SK-N-SH (cell line): ENCODE measurements at regions of chr17 and their contacts with region 1.

Region 1: DNA sequence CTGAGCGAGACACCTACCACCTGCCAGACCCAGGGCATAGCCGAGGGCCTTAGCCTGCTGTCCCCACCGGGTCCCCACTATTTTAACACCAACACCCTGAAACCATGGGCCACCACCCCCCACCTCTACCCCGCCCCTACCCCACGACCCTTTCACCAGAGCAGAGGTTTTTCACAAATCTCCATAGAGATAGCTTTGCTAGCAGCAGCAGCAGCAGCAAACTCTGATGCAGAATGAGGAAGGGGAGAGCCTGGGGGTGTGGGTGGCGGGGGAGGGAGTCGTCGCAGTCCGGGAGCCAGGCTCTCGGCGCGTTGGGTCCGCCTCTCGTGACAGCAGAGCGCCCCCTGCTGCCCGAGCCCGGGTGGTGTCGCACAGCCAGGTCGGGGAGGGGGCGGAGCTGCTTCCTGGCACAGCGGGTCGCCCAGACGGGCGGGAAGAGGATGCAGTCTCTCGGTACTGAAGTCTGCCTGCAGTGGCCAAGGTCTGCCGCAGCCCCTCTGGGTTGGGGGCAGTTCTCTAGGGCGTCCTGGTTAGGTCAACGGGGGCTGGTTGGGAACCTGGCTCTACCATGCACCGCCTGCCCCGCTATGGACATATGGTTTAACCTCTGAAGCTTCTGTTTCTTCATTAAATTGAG is 38.1 kb upstream of the CCDC182 start:
- DNase-seq: peak; percentile 98
- H3K4me3 ChIP-seq: peak overlapping the region in 1 of 2 experiments; percentile 55; a peak in 2 of 4 replicates
- H3K27ac ChIP-seq: peak overlapping the region in 1 of 2 experiments; percentile 99; a peak in 2 of 4 replicates
- H3K4me1 ChIP-seq: peaks cover 0 to 40% of the 10 kb centered on the region in 2 experiments; a peak in 3 of 4 replicates
- H3K27me3 ChIP-seq: peaks cover 22% of the 10 kb centered on the region
- CTCF ChIP-seq: peak; percentile 94
- EP300 ChIP-seq: peak in 1 of 2 experiments; percentile 65; a peak in 2 of 4 replicates
- RAD21 ChIP-seq: peak; percentile 97

Region 2: GRCh38 chr17:57282296-57282695 is 500.9 kb before region 1 on chr17:
- CTCF ChIA-PET with region 1: interaction called, 12 read pairs
- POLR2A ChIA-PET with region 1: interaction called, 4 read pairs
- DNase-seq: peak; percentile 63
- H3K4me3 ChIP-seq: no peak overlapping the region
- H3K27ac ChIP-seq: peak overlapping the region in 1 of 2 experiments; percentile 71; a peak in 2 of 4 replicates
- H3K4me1 ChIP-seq: peaks cover 11 to 61% of the 10 kb centered on the region in 2 experiments; a peak in 3 of 4 replicates
- H3K27me3 ChIP-seq: no peaks in the 10 kb centered on the region
- CTCF ChIP-seq: peak; percentile 16; the same call in 1 of the 2 replicates
- EP300 ChIP-seq: no peak
- RAD21 ChIP-seq: peak; percentile 42; the same call in 1 of the 2 replicates

Region 3: GRCh38 chr17:57570724-57571344 is 212.4 kb before region 1 on chr17:
- CTCF ChIA-PET with region 1: interaction called, 45 read pairs
- POLR2A ChIA-PET with region 1: interaction called, 9 read pairs
- DNase-seq: no peak
- H3K4me3 ChIP-seq: no peak overlapping the region
- H3K27ac ChIP-seq: peak overlapping the region in 1 of 2 experiments; percentile 100; a peak in 2 of 4 replicates
- H3K4me1 ChIP-seq: peaks cover 0 to 87% of the 10 kb centered on the region in 2 experiments; a peak in 2 of 4 replicates
- H3K27me3 ChIP-seq: no peaks in the 10 kb centered on the region
- CTCF ChIP-seq: no peak
- EP300 ChIP-seq: peak in 1 of 2 experiments; percentile 41; a peak in 1 of 4 replicates
- RAD21 ChIP-seq: peak; percentile 5; the same call in 1 of the 2 replicates

Region 4: DNA sequence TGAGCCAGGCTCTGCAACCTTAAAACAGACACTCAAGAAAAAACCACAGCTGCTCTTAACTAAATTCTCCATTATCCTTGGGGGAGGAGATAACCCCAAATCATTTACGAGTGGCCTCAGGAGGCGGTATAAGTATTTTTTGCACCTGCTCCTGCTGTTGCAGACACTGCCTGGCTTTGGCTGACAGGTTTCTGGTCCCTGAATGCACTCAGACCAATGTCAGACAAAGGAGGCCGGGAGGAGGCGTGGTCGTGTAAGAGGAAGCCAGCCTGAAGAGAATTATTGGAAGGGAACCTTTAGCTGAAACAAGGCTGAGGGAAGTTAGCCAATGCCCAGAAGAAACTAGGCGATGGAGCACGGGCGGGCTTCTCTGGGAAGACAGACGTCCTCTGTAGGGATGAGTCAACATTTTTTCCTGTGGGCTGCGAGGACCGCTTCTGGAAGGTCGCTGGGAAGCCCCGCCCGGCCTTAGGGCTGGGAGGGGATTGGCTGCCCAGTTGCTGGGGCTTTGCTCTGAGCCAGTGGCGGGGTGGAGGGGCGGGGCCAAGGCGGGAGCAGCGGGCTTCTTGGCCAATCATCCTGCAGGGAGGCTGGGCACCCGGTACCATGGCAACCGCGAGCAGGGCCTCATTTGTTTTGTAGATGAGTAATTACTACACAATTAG is 120.4 kb before region 1 on chr17:
- CTCF ChIA-PET with region 1: interaction called, 30 read pairs
- POLR2A ChIA-PET with region 1: interaction called, 7 read pairs
- DNase-seq: peak; percentile 97
- H3K4me3 ChIP-seq: peak overlapping the region; percentile 45 to 47
- H3K27ac ChIP-seq: peak overlapping the region; percentile 99 to 100
- H3K4me1 ChIP-seq: peaks cover 28 to 79% of the 10 kb centered on the region in 2 experiments
- H3K27me3 ChIP-seq: no peaks in the 10 kb centered on the region
- CTCF ChIP-seq: peak; percentile 37
- EP300 ChIP-seq: peak; percentile 54 to 88; a peak in 3 of 4 replicates
- RAD21 ChIP-seq: no peak; the same call in none of the 2 replicates

Region 5: GRCh38 chr17:57755480-57756070 is 27.6 kb before region 1 on chr17:
- CTCF ChIA-PET with region 1: interaction called, 71 read pairs
- POLR2A ChIA-PET with region 1: interaction called, 30 read pairs
- DNase-seq: no peak
- H3K4me3 ChIP-seq: no peak overlapping the region
- H3K27ac ChIP-seq: peak overlapping the region in 1 of 2 experiments; percentile 44; a peak in 1 of 4 replicates
- H3K4me1 ChIP-seq: peaks cover 0 to 51% of the 10 kb centered on the region in 2 experiments; a peak in 2 of 4 replicates
- H3K27me3 ChIP-seq: peaks cover 7% of the 10 kb centered on the region; the same call in 1 of the 2 replicates
- CTCF ChIP-seq: no peak
- EP300 ChIP-seq: no peak
- RAD21 ChIP-seq: no peak

Region 6: GRCh38 chr17:57823469-57824401 is 40.5 kb after region 1 on chr17:
- CTCF ChIA-PET with region 1: interaction called, 16 read pairs
- POLR2A ChIA-PET with region 1: interaction called, 3 read pairs
- DNase-seq: no peak
- H3K4me3 ChIP-seq: no peak overlapping the region
- H3K27ac ChIP-seq: no peak overlapping the region
- H3K4me1 ChIP-seq: no peaks in the 10 kb centered on the region; a peak in 1 of 4 replicates
- H3K27me3 ChIP-seq: no peaks in the 10 kb centered on the region
- CTCF ChIP-seq: no peak
- EP300 ChIP-seq: no peak
- RAD21 ChIP-seq: no peak